ENCODE measurements at regions of chr7 and their contacts with region 1.

Region 1: DNA sequence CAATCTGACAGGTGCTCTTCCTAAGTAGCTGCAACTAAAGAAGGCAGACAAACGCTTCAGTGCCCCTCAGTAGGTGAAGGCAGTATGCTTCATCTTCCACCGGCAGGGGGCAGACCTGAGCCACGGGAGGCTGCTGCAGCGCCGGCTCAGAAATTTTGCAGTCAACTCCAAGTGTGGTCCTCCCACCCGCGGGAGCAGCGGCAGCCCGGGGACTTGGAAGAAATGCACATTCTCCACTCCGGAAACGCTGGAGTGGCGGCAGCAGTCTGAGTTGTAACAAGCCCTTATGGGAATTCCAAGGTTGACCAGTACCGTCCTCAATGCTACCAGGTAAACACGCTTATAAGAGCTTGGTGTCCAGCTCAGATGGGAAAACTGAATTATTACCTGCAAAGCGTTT is 3.4 kb downstream of the IGFBP3 start:
- DNase-seq: peak; percentile 62
- ATAC-seq: peak; percentile 57
- H3K4me3 Mint-ChIP-seq: no peak overlapping the region
- H3K27ac Mint-ChIP-seq: no peak overlapping the region
- H3K4me1 Mint-ChIP-seq: peaks cover 11% of the 10 kb centered on the region
- H3K27me3 Mint-ChIP-seq: peaks cover 55% of the 10 kb centered on the region
- CTCF ChIP-seq: no peak

Region 2: DNA sequence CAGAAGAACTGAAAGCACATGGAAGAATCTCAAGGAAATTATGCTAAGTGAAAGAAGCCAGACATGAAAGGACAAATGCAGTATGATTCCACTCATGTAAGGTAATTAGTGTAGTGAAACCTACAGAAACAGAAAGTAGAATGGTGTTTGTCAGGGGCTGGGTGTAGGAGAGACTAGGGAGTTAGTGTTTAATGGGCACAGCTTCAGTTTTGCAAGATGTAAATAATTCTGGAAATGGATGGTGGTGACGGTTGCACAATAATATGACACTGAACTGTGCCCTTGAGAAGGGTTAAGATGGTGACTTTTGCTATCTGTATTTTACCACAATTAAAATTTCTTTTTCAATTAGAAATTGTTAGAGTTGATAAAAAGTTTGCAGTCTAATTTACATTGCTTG is 500.8 kb before region 1 on chr7:
- CTCF ChIA-PET with region 1: no interaction called
- POLR2A ChIA-PET with region 1: no interaction called
- intact Hi-C with region 1: no loop called
- DNase-seq: no peak
- ATAC-seq: no peak
- H3K4me3 Mint-ChIP-seq: no peak overlapping the region
- H3K27ac Mint-ChIP-seq: no peak overlapping the region
- H3K4me1 Mint-ChIP-seq: no peaks in the 10 kb centered on the region
- H3K27me3 Mint-ChIP-seq: no peaks in the 10 kb centered on the region
- CTCF ChIP-seq: no peak

Region 3: GRCh38 chr7:47088329-47089067 is 1170.8 kb after region 1 on chr7:
- CTCF ChIA-PET with region 1: interaction called, 4 read pairs
- POLR2A ChIA-PET with region 1: no interaction called
- intact Hi-C with region 1: loop called (anchors 1 kb)
- DNase-seq: no peak
- ATAC-seq: peak; percentile 60
- H3K4me3 Mint-ChIP-seq: no peak overlapping the region
- H3K27ac Mint-ChIP-seq: no peak overlapping the region
- H3K4me1 Mint-ChIP-seq: peaks cover 3% of the 10 kb centered on the region
- H3K27me3 Mint-ChIP-seq: peaks cover 5% of the 10 kb centered on the region
- CTCF ChIP-seq: peak; percentile 79

Region 4: GRCh38 chr7:47179812-47180515 is 1262.3 kb after region 1 on chr7:
- CTCF ChIA-PET with region 1: interaction called, 16 read pairs
- POLR2A ChIA-PET with region 1: no interaction called
- intact Hi-C with region 1: loop called (anchors 1 kb)
- DNase-seq: no peak
- ATAC-seq: no peak
- H3K4me3 Mint-ChIP-seq: no peak overlapping the region
- H3K27ac Mint-ChIP-seq: no peak overlapping the region
- H3K4me1 Mint-ChIP-seq: peaks cover 7% of the 10 kb centered on the region
- H3K27me3 Mint-ChIP-seq: peaks cover 5% of the 10 kb centered on the region
- CTCF ChIP-seq: no peak